ENCODE measurements at regions of chr12 and their contacts with region 1.

Region 1: GRCh38 chr12:98470469-98471082 is 44.8 kb upstream of the TMPO start:
- DNase-seq: peak in 1 of 2 experiments; percentile 49
- H3K4me3 ChIP-seq: no peak overlapping the region
- H3K27ac ChIP-seq: no peak overlapping the region
- H3K4me1 ChIP-seq: peaks cover 10% of the 10 kb centered on the region
- H3K27me3 ChIP-seq: no peaks in the 10 kb centered on the region
- CTCF ChIP-seq: no peak

Region 2: DNA sequence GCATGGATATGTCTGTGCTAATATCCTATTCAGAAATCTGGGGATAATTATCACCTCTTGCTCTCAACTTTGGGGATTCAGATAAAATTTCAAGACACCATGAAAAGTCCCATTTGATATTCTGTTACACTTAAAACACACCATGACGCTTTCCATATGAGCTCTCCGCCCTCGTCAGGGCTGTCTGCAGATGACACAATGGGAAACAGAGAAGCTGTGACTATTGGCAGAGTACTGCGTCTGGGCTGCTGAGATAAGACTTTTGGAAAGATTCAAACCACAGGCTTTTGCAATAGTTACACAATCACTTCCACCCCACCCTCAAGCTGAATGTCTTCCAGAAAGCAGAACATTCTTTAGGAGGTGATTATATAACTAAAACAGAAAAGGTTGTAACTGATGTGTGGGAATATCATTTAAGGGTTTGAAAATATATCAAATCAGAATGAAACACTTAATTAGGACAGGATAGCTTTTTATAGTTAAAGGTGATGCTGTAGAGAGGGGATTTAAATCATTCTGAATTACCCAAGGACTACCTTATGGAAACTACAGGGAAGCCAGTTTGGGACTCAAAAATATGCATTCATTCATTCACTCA is 30.5 kb before region 1 on chr12:
- CTCF ChIA-PET with region 1: no interaction called
- POLR2A ChIA-PET with region 1: no interaction called
- intact Hi-C with region 1: loop called (anchors 1 kb)
- DNase-seq: peak; percentile 65 to 88
- H3K4me3 ChIP-seq: no peak overlapping the region
- H3K27ac ChIP-seq: no peak overlapping the region
- H3K4me1 ChIP-seq: peaks cover 8% of the 10 kb centered on the region
- H3K27me3 ChIP-seq: no peaks in the 10 kb centered on the region
- CTCF ChIP-seq: no peak

Region 3: DNA sequence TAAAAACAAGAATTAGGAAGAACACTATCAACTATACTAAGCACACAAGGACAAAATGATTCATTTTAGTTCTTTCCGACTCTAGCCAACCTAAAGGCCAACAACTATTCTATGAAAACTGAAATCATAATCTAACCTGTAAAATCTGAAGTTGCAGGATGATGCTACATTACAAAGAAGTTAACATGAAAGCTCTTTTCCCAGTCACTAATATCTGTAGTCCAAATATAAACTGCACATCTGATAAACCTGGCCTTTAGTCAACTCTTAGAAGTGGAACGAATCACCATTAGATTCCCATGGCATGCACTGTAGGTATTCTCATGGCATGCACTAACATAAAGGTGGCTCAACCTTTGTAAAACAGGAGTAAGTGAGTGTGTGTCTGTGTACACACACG is 1630.4 kb after region 1 on chr12:
- CTCF ChIA-PET with region 1: no interaction called
- POLR2A ChIA-PET with region 1: interaction called, 12 read pairs
- intact Hi-C with region 1: no loop called
- DNase-seq: no peak
- H3K4me3 ChIP-seq: no peak overlapping the region
- H3K27ac ChIP-seq: no peak overlapping the region
- H3K4me1 ChIP-seq: no peaks in the 10 kb centered on the region
- H3K27me3 ChIP-seq: no peaks in the 10 kb centered on the region
- CTCF ChIP-seq: no peak

Measured in PC-9 (cell line).